ENCODE measurements at regions of chr1 and their contacts with region 1.

Region 1: DNA sequence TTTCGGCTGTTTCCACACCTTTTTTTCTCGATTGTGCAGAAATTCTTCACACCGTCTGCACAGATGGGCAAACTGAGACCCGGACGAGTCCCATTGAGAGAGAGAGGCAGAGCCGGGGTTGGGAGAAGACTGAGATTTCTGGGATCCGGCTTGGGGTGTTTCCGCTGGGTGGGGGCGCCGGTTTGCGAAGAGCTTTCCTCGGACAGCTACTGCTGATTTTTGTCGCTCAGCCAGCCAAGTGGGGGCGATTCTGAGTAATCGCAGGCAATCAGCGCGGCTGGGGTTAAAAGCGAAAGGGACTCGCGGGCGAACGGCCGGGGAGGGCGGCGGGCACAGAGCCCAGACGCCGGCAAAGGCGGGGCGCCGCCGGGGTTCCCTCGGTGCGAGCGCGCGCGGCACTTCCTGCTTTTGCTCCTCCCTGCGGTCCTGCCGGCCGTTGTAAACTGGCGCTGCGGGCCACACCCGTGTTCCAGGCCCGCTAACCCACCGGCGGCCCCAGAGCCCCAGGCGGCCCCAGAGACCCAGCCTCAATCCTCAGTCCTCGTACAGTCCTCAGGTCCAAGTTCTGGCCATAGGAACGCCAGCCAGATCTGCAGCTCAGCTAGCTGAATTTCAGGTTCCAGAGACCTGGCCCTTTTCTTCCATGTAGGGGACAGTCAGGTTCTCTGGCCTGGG is 32.4 kb upstream of the JUN start:
- DNase-seq: peak; percentile 93
- ATAC-seq: peak; percentile 93

Region 2: DNA sequence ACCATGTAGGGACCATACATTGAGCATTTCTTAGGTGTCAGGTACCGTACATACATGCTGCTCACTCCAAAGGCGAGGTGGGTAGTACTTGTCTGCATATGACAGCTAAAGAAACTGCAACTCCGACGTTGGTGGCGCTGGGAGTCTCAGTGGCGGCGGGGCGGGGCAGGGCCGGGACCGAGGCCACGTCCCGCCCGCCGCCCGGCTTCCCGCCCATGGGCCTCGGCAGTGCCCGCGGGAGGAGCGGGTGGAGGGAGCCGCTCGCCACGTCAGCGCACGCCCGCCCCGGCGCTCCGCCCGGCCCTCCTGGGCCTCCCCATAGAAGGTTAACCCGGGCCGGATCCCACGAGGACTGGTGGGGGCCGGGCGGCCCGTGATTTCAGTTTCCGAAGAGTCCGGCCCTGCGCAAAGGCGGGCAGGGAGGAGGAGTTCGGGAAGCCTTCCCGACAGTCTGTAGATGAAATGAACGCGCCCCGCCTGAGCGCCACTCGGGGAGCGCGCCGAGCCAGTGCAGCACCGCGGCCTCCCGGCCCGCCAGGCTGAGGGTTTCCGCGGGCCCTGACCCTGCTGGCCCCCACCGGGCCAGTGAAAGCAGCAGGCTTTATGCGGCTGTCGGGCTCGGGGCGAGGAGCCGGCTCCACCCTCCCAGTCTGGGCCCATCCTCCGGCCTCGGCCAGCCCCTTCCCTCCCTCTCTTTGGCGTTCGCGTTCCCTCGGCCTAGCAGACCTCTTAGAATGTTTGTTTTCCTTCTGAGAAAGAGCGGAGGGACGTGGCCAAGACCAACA is 87.5 kb after region 1 on chr1:
- intact Hi-C with region 1: loop called in 1 of 2 experiments (anchors 5 kb)
- DNase-seq: peak; percentile 96
- ATAC-seq: peak; percentile 94 to 97

Region 3: DNA sequence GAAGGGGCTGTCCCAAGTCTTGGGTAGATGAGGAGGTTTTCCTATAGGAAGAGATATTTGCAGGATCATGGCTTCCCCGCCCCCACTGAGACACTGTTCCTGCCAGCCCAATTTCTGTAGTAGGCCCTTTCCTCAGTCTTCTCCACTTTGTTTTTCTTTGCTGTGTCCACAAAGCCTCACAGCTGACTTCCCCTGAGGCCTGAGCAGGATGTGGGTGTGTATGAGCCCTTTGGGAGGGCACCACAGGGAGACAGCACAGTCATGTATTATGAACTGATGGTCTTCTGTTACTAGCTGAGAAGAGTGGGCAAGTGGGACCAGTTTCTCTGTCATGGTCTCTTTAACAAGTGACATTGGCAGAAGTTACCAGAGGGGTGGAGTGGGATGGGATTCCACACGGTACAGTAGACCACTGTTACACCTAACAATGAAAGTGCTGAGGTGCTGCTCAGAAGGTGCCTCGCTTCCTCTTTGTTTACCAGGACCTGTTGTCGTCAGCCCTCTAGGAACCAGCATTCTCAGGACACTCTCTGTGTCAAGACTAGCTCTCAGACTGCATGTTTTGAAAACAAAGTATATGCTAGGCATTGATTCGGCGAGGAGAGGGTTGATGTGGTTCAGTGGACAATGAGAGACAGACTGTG is 744.7 kb after region 1 on chr1:
- intact Hi-C with region 1: no loop called
- DNase-seq: no peak
- ATAC-seq: no peak